ENCODE measurements at regions of chr5 and their contacts with region 1.

Region 1: DNA sequence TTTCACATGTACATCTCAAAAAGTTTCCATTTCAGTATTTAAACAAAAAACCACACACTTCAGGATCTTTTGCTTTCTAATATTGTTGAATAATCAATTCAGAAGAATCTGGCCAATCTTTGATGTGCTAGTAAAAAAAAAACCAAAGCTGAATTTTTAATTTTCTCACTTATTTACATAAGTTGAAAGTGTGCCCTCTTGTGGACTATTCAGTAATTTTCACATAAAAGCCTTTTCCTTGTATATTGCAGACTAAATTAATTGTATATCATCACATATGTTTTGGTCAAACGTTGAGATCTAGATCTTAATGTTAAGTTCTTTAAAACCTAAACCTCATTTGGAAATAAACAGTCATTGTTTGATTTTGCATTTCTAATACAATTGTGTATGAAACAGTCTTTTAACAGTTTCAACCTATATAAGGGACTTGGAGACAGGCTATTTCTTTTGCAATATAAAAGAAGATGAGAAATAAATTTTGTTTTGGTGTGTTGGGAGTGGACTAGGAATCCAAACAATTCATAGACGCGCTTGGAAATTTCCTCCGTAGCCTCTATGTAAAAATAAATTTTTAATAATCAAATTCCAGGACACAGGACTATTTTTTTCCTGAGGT is 68.1 kb downstream of the NIPBL start:
- DNase-seq: peak in 7 of 9 donors; percentile 7 to 57 (median 47)
- ATAC-seq: peak; percentile 73
- H3K4me3 ChIP-seq: no peak overlapping the region
- H3K4me3 Mint-ChIP-seq: no peak overlapping the region
- H3K27ac ChIP-seq: no peak overlapping the region
- H3K27ac Mint-ChIP-seq: no peak overlapping the region
- H3K4me1 ChIP-seq: peaks cover 0 to 4% of the 10 kb centered on the region in 2 donors
- H3K4me1 Mint-ChIP-seq: peaks cover 10 to 80% (median 69%) of the 10 kb centered on the region in 7 donors
- H3K27me3 ChIP-seq: no peaks in the 10 kb centered on the region
- H3K27me3 Mint-ChIP-seq: no peaks in the 10 kb centered on the region

Region 2: GRCh38 chr5:36882250-36882649 is 62.5 kb before region 1 on chr5:
- CTCF ChIA-PET with region 1: interaction called, 3 read pairs
- POLR2A ChIA-PET with region 1: interaction called, 3 read pairs
- intact Hi-C with region 1: loop called in 1 of 2 experiments (anchors 1 kb)
- DNase-seq: no peak
- ATAC-seq: no peak
- H3K4me3 ChIP-seq: no peak overlapping the region
- H3K4me3 Mint-ChIP-seq: peak overlapping the region in 8 of 10 donors; percentile 50 to 96 (median 60)
- H3K27ac ChIP-seq: no peak overlapping the region
- H3K27ac Mint-ChIP-seq: peak overlapping the region in 4 of 9 donors; percentile 0 to 60 (median 20)
- H3K4me1 ChIP-seq: peaks cover 29 to 50% of the 10 kb centered on the region in 2 donors
- H3K4me1 Mint-ChIP-seq: peaks cover 50 to 85% (median 75%) of the 10 kb centered on the region in 7 donors
- H3K27me3 ChIP-seq: no peaks in the 10 kb centered on the region
- H3K27me3 Mint-ChIP-seq: no peaks in the 10 kb centered on the region

Region 3: DNA sequence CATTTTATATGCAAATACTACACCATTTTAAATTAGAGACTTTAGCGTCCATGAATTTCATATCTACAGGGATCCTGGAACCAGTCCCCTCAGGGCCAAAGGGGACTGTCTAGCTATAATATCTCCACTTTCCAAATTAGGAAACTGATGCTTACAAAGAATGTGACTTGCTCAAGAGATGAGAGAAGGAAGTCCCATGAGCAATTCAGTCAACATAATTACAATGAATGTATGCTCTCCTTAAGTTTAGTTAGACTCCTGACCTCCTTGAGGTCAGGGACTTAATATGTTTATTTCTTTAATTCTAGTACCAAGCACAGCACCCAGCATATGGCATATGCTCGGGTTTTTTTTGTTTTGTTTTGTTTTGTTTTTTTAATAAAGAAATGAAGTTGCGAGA is 44.4 kb before region 1 on chr5:
- CTCF ChIA-PET with region 1: no interaction called
- POLR2A ChIA-PET with region 1: no interaction called
- intact Hi-C with region 1: no loop called
- DNase-seq: no peak
- ATAC-seq: no peak
- H3K4me3 ChIP-seq: no peak overlapping the region
- H3K4me3 Mint-ChIP-seq: no peak overlapping the region
- H3K27ac ChIP-seq: no peak overlapping the region
- H3K27ac Mint-ChIP-seq: peak overlapping the region in 1 of 9 donors; percentile 44
- H3K4me1 ChIP-seq: peaks cover 7 to 8% of the 10 kb centered on the region in 2 donors
- H3K4me1 Mint-ChIP-seq: peaks cover 41 to 92% (median 83%) of the 10 kb centered on the region in 7 donors
- H3K27me3 ChIP-seq: no peaks in the 10 kb centered on the region
- H3K27me3 Mint-ChIP-seq: no peaks in the 10 kb centered on the region

Region 4: DNA sequence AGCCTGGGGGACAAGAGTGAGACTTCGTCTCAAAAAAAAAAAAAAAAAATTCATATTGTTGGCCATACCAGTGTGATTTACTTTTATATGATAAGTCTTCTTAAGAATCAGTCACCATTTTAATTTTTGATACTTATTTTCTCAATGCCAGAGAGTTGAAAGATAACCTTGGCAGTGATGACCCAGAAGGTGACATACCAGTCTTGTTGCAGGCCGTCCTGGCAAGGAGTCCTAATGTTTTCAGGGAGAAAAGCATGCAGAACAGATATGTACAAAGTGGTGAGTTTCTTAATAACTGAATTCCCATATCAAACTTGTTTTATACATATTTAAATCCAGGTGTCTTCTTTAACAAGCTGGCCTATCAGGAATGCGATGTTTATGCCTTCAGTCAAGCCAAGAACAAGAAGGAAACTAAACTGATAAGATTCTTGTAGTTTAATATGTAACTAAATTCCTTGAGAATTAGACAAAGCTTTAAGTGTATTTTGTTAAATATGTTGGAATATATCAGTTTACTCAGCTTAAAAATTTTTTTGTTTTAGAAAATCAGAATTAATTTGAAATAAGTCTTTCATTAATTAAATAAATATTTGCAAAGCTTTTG is 13.3 kb after region 1 on chr5:
- CTCF ChIA-PET with region 1: interaction called, 3 read pairs
- POLR2A ChIA-PET with region 1: no interaction called
- intact Hi-C with region 1: loop called in 1 of 2 experiments (anchors 2 kb)
- DNase-seq: no peak
- ATAC-seq: no peak
- H3K4me3 ChIP-seq: no peak overlapping the region
- H3K4me3 Mint-ChIP-seq: no peak overlapping the region
- H3K27ac ChIP-seq: no peak overlapping the region
- H3K27ac Mint-ChIP-seq: peak overlapping the region in 1 of 9 donors; percentile 55
- H3K4me1 ChIP-seq: no peaks in the 10 kb centered on the region
- H3K4me1 Mint-ChIP-seq: peaks cover 0 to 22% (median 10%) of the 10 kb centered on the region in 7 donors
- H3K27me3 ChIP-seq: no peaks in the 10 kb centered on the region
- H3K27me3 Mint-ChIP-seq: no peaks in the 10 kb centered on the region